ENCODE measurements at regions of chr11 and their contacts with region 1.

Region 1: GRCh38 chr11:75547580-75548058 is 14.4 kb upstream of the SERPINH1 start:
- DNase-seq: peak; percentile 89
- H3K4me3 ChIP-seq: no peak overlapping the region
- H3K27ac ChIP-seq: peak overlapping the region in 2 of 4 donors; percentile 9 to 47
- H3K4me1 ChIP-seq: peaks cover 0 to 8% (median 6%) of the 10 kb centered on the region in 4 donors
- H3K27me3 ChIP-seq: no peaks in the 10 kb centered on the region
- CTCF ChIP-seq: peak; percentile 84 to 91 (median 86)
- EP300 ChIP-seq: no peak
- POLR2A ChIP-seq: no peak

Region 2: GRCh38 chr11:75422253-75423231 is 125.1 kb before region 1 on chr11:
- intact Hi-C with region 1: no loop called
- DNase-seq: no peak
- H3K4me3 ChIP-seq: no peak overlapping the region
- H3K27ac ChIP-seq: no peak overlapping the region
- H3K4me1 ChIP-seq: peaks cover 0 to 22% (median 6%) of the 10 kb centered on the region in 4 donors
- H3K27me3 ChIP-seq: no peaks in the 10 kb centered on the region
- CTCF ChIP-seq: no peak
- EP300 ChIP-seq: no peak
- POLR2A ChIP-seq: no peak

Region 3: DNA sequence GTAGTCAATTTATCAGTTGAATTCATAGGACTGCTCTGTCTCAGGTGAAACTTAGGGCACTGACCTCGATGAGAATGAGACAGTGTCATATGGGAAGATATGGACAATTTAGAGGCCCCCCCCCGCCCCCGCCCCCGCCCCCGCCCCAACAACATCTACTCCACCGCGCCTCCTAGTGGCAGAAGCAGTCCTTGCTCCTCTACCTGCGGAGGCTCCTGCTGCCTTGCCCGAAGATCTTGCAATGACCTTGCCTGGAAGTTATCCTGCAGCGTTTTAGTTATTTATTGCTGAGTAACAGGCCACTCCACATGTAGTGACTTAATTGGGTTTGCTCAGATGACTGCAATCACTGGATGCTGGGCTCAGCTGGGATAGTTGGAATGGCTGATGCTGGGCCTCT is 29.6 kb after region 1 on chr11:
- intact Hi-C with region 1: loop called (anchors 1 kb)
- DNase-seq: no peak
- H3K4me3 ChIP-seq: no peak overlapping the region
- H3K27ac ChIP-seq: peak overlapping the region in 2 of 4 donors; percentile 22 to 48
- H3K4me1 ChIP-seq: peaks cover 0 to 22% (median 16%) of the 10 kb centered on the region in 4 donors
- H3K27me3 ChIP-seq: no peaks in the 10 kb centered on the region
- CTCF ChIP-seq: peak in 2 of 4 experiments; percentile 45 to 83
- EP300 ChIP-seq: no peak
- POLR2A ChIP-seq: no peak

Region 4: GRCh38 chr11:75667831-75668450 is 120.3 kb after region 1 on chr11:
- intact Hi-C with region 1: loop called (anchors 5 kb)
- DNase-seq: peak; percentile 79
- H3K4me3 ChIP-seq: peak overlapping the region; percentile 42 to 74 (median 62)
- H3K27ac ChIP-seq: peak overlapping the region; percentile 75 to 82 (median 80)
- H3K4me1 ChIP-seq: peaks cover 0 to 25% (median 20%) of the 10 kb centered on the region in 4 donors
- H3K27me3 ChIP-seq: no peaks in the 10 kb centered on the region
- CTCF ChIP-seq: no peak
- EP300 ChIP-seq: no peak
- POLR2A ChIP-seq: no peak

Region 5: GRCh38 chr11:75706260-75706729 is 158.7 kb after region 1 on chr11:
- intact Hi-C with region 1: loop called (anchors 1 kb)
- DNase-seq: peak; percentile 85
- H3K4me3 ChIP-seq: no peak overlapping the region
- H3K27ac ChIP-seq: peak overlapping the region in 2 of 4 donors; percentile 34 to 46
- H3K4me1 ChIP-seq: peaks cover 0 to 14% (median 11%) of the 10 kb centered on the region in 4 donors
- H3K27me3 ChIP-seq: no peaks in the 10 kb centered on the region
- CTCF ChIP-seq: peak; percentile 84 to 97 (median 89)
- EP300 ChIP-seq: no peak
- POLR2A ChIP-seq: no peak

Region 6: DNA sequence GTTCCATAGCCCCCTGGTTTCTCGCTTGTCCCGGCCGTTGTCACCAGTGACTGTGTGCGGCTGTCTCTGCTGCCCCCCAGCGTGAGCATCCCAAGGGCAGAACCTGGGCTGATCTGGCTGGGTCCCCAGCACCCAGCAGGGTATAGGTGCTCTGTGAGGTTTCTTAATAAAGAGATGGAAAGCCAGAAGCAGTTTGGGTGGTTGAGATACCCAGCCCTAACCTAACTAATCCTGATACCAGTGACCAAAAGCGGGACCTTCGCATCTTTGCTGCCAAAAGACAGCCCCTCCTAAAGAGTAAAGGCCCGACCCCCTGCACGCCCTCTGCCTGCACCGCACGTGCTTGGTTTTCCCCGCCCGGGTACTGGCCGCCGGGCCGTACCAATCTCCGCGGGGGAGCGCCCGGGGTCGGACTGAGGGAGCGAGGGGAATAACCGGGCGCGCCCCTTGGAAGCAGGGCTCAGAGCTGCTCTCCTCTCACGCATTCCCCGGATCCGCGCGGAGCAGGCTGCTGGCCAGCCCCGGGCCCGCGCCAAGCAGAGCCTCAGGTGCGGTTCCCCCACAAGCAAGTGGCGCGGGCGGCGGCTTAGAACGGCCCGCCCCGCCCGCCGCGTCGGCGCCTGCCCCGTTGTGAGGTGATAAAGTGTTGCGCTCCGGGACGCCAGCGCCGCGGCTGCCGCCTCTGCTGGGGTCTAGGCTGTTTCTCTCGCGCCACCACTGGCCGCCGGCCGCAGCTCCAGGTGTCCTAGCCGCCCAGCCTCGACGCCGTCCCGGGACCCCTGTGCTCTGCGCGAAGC is 220.7 kb after region 1 on chr11 and contains the start of gene DGAT2:
- intact Hi-C with region 1: loop called (anchors 5 kb)
- DNase-seq: peak; percentile 76
- H3K4me3 ChIP-seq: peak within 1 kb of the TSS; percentile 25 to 54 (median 48)
- H3K27ac ChIP-seq: peak within 1 kb of the TSS in 1 of 4 donors; percentile 29
- H3K4me1 ChIP-seq: peaks cover 0 to 20% (median 19%) of the 10 kb centered on the region in 4 donors
- H3K27me3 ChIP-seq: peaks cover 0 to 3% (median 0%) of the 10 kb centered on the region in 3 donors
- CTCF ChIP-seq: no peak
- EP300 ChIP-seq: no peak
- POLR2A ChIP-seq: no peak
- total RNA-seq, gene DGAT2: 0.55 to 20.3 (median 0.92) TPM